Activated T-helper 1 cell treated with anti-CD3 and anti-CD28 coated beads, Interleukin-12 subunit alpha, Interleukin-12 subunit beta, Interleukin-2, Interleukin-4 antibody, amounts not matched to agents 30 ng/mL and 10 ng/mL and 1 ng/mL, durations not matched to agents 14 hours and 24 hours and 36 hours (primary cell): ENCODE measurements at regions of chr10 and their contacts with region 1.

Region 1: DNA sequence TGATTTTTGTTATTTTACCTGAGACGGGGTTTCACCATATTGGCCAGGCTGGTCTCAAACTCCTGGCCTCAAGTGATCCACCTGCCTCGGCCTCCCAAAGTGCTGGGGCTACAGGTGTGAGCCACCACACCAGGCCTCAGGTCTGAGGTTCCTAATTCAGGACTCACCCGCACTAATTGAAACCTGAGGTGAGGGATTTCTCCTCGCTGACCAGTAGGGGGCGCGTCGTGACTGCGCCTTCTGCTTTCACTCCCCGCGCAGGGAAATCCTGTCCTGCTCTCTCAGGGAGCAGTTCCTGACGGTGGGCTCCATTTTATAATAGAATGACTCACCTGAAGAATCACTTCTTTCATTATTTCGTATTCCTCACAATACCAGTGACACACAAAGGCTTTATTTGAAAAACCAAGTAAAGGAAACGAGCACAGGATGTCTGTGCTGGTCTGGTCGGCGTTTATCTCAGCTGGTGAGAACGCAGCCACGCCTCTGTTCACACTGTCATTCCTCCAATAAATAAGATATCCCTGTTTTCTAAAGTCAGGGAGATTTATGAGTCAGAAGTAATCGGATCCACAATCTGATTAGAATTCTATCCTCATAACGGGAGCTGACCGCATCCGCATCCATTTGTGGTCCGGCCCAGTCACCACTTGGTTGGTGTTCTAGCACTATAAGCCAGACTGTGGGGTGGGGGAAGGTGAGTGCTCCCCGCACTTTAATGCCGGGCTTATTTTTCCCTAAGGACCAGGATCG is 35.4 kb downstream of the BAG3 start:
- DNase-seq: peak; percentile 59
- H3K4me3 Mint-ChIP-seq: peak overlapping the region; percentile 27
- H3K27ac Mint-ChIP-seq: peak overlapping the region; percentile 67
- H3K4me1 Mint-ChIP-seq: peaks cover 27% of the 10 kb centered on the region
- H3K27me3 Mint-ChIP-seq: peaks cover 7% of the 10 kb centered on the region

Region 2: DNA sequence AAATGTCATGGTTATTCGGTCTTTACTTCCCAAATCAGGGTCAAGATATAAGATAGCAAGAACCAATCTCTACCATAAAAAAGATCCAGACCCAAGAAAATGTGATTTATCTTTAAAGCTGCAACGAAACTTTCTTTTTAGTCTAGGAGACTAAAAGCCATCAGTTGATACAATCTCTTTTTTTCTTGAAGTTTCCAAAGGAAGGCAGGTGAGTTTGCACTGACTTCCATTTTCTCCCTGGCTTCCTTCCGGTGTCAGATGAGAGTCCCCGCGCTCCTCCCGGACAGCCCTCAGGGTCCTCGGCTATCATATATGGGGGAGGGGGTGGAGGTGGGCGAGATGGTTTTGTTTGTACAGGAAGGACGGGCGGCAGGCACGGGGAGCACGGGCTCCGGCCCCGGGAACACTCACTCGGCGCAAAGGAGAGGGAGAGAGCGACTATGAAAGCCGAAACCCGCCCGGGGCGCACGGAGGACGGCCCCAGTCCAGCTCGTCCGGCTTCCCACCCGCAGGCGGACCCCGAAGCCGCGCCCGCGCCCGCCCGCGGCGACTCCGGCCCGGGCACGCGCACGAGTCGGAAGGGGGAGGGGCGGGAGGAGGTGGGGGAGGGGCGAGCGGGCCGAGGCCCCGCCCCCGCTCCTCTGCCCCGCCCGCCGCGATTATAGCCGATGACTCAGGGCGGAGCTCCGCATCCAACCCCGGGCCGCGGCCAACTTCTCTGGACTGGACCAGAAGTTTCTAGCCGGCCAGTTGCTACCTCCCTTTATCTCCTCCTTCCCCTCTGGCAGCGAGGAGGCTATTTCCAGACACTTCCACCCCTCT is 35.7 kb before region 1 on chr10 and contains the start of gene BAG3:
- intact Hi-C with region 1: loop called (anchors 1 kb)
- DNase-seq: peak; percentile 70
- H3K4me3 Mint-ChIP-seq: peak within 1 kb of the TSS; percentile 95
- H3K27ac Mint-ChIP-seq: peak within 1 kb of the TSS; percentile 96
- H3K4me1 Mint-ChIP-seq: peaks cover 50% of the 10 kb centered on the region
- H3K27me3 Mint-ChIP-seq: no peaks in the 10 kb centered on the region
- total RNA-seq, gene BAG3: 30.4 and 30.5 TPM in 2 replicates

Region 3: DNA sequence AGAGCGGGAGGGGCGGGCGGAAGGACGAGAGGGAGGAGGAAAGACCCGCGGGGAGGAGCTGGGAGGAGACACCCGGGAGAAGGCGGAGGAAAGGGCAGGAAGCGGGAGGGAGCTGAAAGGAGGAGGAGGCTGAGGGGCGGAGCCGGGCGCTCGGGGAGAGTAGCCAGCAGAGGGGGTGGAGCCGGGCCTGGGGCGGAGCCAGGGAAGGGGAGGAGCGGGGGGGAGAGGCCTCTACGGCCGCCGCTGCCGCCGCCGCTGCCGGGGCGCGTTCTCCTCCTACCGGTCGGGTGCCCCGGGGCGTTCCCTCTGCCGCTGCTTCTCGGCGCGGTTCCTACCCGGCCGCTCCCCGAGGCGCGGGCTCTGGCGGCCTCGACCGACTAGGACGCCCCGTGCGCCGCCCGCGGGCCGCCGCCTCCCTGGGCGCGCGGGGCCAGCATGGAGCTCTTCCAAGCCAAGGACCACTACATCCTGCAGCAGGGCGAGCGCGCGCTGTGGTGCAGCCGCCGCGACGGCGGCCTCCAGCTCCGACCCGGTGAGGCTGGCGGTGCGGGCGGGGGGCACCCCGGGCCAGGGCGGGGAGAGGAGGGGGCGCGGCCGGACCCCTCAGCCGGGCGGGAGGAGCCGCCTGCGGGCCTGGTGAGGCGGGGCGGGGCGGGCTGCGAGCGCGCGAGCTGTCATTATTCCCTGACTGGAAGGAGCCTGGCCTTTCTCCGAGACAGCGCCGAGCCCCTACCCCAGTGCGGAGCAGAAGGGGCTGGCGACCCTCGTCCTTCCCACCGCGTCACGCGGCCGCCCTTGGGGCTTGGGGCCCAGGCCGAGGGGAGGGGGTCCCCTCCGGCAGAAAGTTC is 39.4 kb after region 1 on chr10 and contains the start of gene INPP5F:
- intact Hi-C with region 1: loop called (anchors 1 kb)
- DNase-seq: peak; percentile 98
- H3K4me3 Mint-ChIP-seq: peak within 1 kb of the TSS; percentile 93
- H3K27ac Mint-ChIP-seq: peak within 1 kb of the TSS; percentile 81
- H3K4me1 Mint-ChIP-seq: peaks cover 39% of the 10 kb centered on the region
- H3K27me3 Mint-ChIP-seq: no peaks in the 10 kb centered on the region
- total RNA-seq, gene INPP5F: 17.7 and 19.4 TPM in 2 replicates

Region 4: DNA sequence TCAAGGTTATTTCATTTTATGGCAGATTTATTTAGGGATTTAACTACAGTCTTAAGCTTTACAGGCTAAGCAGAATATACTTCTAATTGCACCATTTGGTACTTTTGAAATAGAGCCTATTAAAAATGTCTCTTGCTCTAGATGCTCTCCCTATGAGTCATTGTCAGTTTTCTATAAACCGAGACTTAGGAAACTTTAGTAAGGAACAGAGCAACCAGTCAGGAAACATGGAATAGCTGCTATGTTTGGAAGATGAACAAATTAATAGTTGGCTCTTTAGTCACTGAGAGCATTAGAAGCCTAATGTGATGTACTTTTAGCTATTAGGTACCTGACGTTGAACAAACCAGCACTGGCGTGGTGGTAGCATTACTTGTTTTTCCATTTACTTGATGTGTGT is 74.5 kb after region 1 on chr10:
- intact Hi-C with region 1: no loop called
- DNase-seq: no peak
- H3K4me3 Mint-ChIP-seq: no peak overlapping the region
- H3K27ac Mint-ChIP-seq: no peak overlapping the region
- H3K4me1 Mint-ChIP-seq: peaks cover 6% of the 10 kb centered on the region
- H3K27me3 Mint-ChIP-seq: no peaks in the 10 kb centered on the region

Region 5: DNA sequence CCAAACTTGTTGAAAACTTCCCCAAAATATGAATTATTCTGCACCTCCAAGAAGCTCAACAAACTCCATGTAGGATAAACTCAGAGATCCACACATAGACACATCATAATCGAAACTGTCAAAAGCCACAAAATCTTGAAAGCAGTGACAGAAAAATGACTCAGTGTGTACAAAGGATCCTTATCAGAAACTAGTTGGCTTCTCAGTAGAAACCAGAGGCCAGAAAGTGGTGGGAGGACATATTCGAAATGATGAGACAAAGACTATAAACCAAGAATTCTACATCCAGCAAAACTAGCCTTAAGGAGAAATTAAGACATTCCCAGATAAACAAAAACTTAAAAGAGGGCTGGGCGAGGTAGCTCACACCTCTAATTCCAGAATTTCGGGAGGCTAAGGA is 147.6 kb after region 1 on chr10:
- intact Hi-C with region 1: loop called (anchors 1 kb)
- DNase-seq: no peak
- H3K4me3 Mint-ChIP-seq: no peak overlapping the region
- H3K27ac Mint-ChIP-seq: peak overlapping the region; percentile 46
- H3K4me1 Mint-ChIP-seq: peaks cover 41% of the 10 kb centered on the region
- H3K27me3 Mint-ChIP-seq: no peaks in the 10 kb centered on the region

Region 6: GRCh38 chr10:120336911-120337540 is 650.4 kb after region 1 on chr10:
- intact Hi-C with region 1: loop called (anchors 2 kb)
- DNase-seq: peak; percentile 15
- H3K4me3 Mint-ChIP-seq: no peak overlapping the region
- H3K27ac Mint-ChIP-seq: no peak overlapping the region
- H3K4me1 Mint-ChIP-seq: no peaks in the 10 kb centered on the region
- H3K27me3 Mint-ChIP-seq: peaks cover 2% of the 10 kb centered on the region